ENCODE measurements at regions of chr12 and their contacts with region 1.

Region 1: DNA sequence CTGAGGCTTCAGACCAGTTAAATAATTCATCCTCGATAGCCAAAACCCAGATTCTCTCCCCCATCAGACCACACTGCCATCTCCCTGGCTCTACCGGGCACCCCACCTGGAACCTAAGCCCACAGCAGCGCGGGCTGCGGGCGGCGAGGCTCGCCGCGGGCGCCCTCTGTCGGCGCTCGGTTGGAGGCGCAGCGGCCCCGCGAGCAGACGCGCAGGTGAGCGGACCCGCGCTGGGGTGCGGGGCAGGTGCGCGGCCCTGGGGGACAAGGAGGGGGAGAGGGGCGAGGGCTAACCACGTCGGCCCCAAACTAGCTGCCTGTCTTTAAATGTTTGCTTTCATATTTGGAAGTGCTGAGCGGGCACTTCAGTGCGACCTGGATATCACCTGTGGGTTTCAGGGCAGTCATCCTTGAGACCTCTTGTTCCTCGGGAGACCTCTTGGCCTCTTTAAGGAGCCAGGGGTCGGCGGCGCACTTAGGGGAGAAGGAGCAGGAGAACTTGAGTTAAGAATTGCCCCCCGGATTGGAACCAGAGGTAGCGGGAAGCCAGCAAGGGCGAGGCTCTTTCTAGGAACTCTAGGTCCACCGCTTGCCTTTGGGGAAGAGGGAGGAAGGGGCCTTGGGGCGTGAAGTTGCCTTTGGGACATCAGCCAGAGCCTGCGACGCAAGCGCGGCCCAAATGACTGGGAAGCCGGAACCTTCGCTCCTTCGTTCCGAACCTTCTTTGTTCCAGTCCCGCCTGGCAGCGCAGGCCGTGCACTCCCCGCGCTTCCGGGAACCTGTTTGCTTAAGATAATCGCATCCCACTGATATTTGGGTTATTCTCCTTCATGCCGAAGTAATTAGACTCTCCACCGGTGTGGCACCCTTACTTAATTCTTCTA is 78.7 kb downstream of the NEDD1 start:
- DNase-seq: peak; percentile 63
- ATAC-seq: peak; percentile 94
- H3K4me3 Mint-ChIP-seq: peak overlapping the region; percentile 52
- H3K27ac Mint-ChIP-seq: no peak overlapping the region
- H3K4me1 Mint-ChIP-seq: peaks cover 2% of the 10 kb centered on the region
- H3K27me3 Mint-ChIP-seq: peaks cover 16% of the 10 kb centered on the region

Region 2: GRCh38 chr12:96578526-96579125 is 407.1 kb before region 1 on chr12:
- CTCF ChIA-PET with region 1: interaction called, 5 read pairs
- POLR2A ChIA-PET with region 1: no interaction called
- intact Hi-C with region 1: loop called (anchors 1 kb)
- DNase-seq: no peak
- ATAC-seq: peak; percentile 86
- H3K4me3 Mint-ChIP-seq: no peak overlapping the region
- H3K27ac Mint-ChIP-seq: no peak overlapping the region
- H3K4me1 Mint-ChIP-seq: no peaks in the 10 kb centered on the region
- H3K27me3 Mint-ChIP-seq: peaks cover 5% of the 10 kb centered on the region

Region 3: GRCh38 chr12:97148941-97149559 is 163.3 kb after region 1 on chr12:
- CTCF ChIA-PET with region 1: interaction called, 3 read pairs
- POLR2A ChIA-PET with region 1: no interaction called
- intact Hi-C with region 1: loop called in 1 of 2 experiments (anchors 5 kb)
- DNase-seq: peak; percentile 75
- ATAC-seq: peak; percentile 93
- H3K4me3 Mint-ChIP-seq: no peak overlapping the region
- H3K27ac Mint-ChIP-seq: no peak overlapping the region
- H3K4me1 Mint-ChIP-seq: no peaks in the 10 kb centered on the region
- H3K27me3 Mint-ChIP-seq: peaks cover 16% of the 10 kb centered on the region

Region 4: DNA sequence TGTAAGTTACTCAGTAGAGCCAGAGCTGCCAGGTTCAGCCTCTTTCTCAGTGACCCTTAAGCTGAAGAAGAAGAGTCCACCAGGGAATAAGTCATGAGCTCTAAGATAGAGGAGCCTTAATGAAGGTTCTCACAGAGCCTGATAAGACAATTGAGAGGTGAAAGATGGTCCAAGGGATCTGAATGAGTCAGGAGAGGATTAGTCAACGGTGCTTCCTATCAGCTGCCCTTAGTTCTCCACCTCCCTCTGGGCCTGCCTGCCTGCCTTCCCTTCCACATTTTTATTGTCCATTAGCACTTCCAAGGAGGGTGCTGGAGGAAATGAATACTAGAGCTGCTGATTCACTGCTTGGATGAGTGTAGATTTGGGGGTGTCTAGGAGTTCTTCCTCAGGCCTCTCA is 315.2 kb after region 1 on chr12:
- CTCF ChIA-PET with region 1: no interaction called
- POLR2A ChIA-PET with region 1: no interaction called
- intact Hi-C with region 1: no loop called
- DNase-seq: no peak
- ATAC-seq: no peak
- H3K4me3 Mint-ChIP-seq: no peak overlapping the region
- H3K27ac Mint-ChIP-seq: no peak overlapping the region
- H3K4me1 Mint-ChIP-seq: no peaks in the 10 kb centered on the region
- H3K27me3 Mint-ChIP-seq: peaks cover 11% of the 10 kb centered on the region

Region 5: DNA sequence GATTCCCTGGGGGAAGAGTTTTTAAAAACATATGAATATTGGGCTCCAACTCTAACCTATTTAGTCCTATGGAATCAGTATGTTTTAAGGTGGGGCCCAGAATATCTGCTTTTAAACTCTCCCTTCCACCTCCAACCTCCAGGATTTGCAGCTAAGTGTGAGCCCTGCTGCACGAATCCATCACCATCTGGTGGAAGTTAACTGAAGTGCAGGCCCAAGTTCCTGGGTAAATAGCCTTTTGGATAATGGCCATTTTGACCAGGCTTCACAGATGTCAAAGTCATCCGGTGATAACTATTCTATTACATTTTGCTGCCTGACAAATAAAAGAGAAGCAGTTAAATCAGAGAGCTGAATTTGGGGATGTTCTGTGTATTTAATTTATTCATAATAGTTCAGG is 418.8 kb after region 1 on chr12:
- CTCF ChIA-PET with region 1: interaction called, 4 read pairs
- POLR2A ChIA-PET with region 1: no interaction called
- intact Hi-C with region 1: loop called (anchors 5 to 10 kb)
- DNase-seq: peak; percentile 25
- ATAC-seq: no peak
- H3K4me3 Mint-ChIP-seq: no peak overlapping the region
- H3K27ac Mint-ChIP-seq: no peak overlapping the region
- H3K4me1 Mint-ChIP-seq: no peaks in the 10 kb centered on the region
- H3K27me3 Mint-ChIP-seq: no peaks in the 10 kb centered on the region

Region 6: GRCh38 chr12:98373025-98373554 is 1387.4 kb after region 1 on chr12:
- CTCF ChIA-PET with region 1: no interaction called
- POLR2A ChIA-PET with region 1: no interaction called
- intact Hi-C with region 1: loop called in 1 of 2 experiments (anchors 5 kb)
- DNase-seq: no peak
- ATAC-seq: no peak
- H3K4me3 Mint-ChIP-seq: no peak overlapping the region
- H3K27ac Mint-ChIP-seq: no peak overlapping the region
- H3K4me1 Mint-ChIP-seq: peaks cover 12% of the 10 kb centered on the region
- H3K27me3 Mint-ChIP-seq: peaks cover 12% of the 10 kb centered on the region

Measured in activated CD4-positive, alpha-beta T cell treated with anti-CD3 and anti-CD28 coated beads for 36 hours (primary cell).